ENCODE measurements at regions of chr15 and their contacts with region 1.

Region 1: GRCh38 chr15:65304389-65305144 is at the start of gene RNU5B-1:
- DNase-seq: peak; percentile 87
- H3K4me3 Mint-ChIP-seq: peak within 1 kb of the TSS; percentile 93
- H3K27ac Mint-ChIP-seq: peak within 1 kb of the TSS; percentile 98
- H3K4me1 Mint-ChIP-seq: peaks cover 42% of the 10 kb centered on the region
- H3K27me3 Mint-ChIP-seq: no peaks in the 10 kb centered on the region
- total RNA-seq, gene RNU5B-1: 14.4 to 36.1 TPM

Region 2: GRCh38 chr15:65184868-65185738 is 119.5 kb before region 1 on chr15 and contains the start of gene CLPX:
- CTCF ChIA-PET with region 1: interaction called, 7 read pairs
- POLR2A ChIA-PET with region 1: interaction called, 13 read pairs
- DNase-seq: peak; percentile 93
- H3K4me3 Mint-ChIP-seq: peak within 1 kb of the TSS; percentile 96
- H3K27ac Mint-ChIP-seq: peak within 1 kb of the TSS; percentile 90
- H3K4me1 Mint-ChIP-seq: peaks cover 23% of the 10 kb centered on the region
- H3K27me3 Mint-ChIP-seq: no peaks in the 10 kb centered on the region
- total RNA-seq, gene CLPX: 44.9 to 47.3 TPM

Region 3: GRCh38 chr15:65286704-65287519 is 17.7 kb before region 1 on chr15 and contains the start of gene PARP16:
- CTCF ChIA-PET with region 1: interaction called, 12 read pairs
- POLR2A ChIA-PET with region 1: interaction called, 23 read pairs
- DNase-seq: peak; percentile 91
- H3K4me3 Mint-ChIP-seq: peak within 1 kb of the TSS; percentile 80
- H3K27ac Mint-ChIP-seq: peak within 1 kb of the TSS; percentile 90
- H3K4me1 Mint-ChIP-seq: peaks cover 39% of the 10 kb centered on the region
- H3K27me3 Mint-ChIP-seq: no peaks in the 10 kb centered on the region
- total RNA-seq, gene PARP16: 19.0 to 21.7 TPM

Region 4: GRCh38 chr15:65318870-65319356 is 14.3 kb after region 1 on chr15:
- CTCF ChIA-PET with region 1: interaction called, 5 read pairs
- POLR2A ChIA-PET with region 1: interaction called, 10 read pairs
- DNase-seq: peak; percentile 79
- H3K4me3 Mint-ChIP-seq: no peak overlapping the region
- H3K27ac Mint-ChIP-seq: no peak overlapping the region
- H3K4me1 Mint-ChIP-seq: no peaks in the 10 kb centered on the region
- H3K27me3 Mint-ChIP-seq: peaks cover 13% of the 10 kb centered on the region

Measured in activated CD4-positive, alpha-beta T cell treated with anti-CD3 and anti-CD28 coated beads, Interleukin-2, amount 10 ng/mL, durations not matched to agents 7 days and 5 days (primary cell).